ENCODE measurements at regions of chr2 and their contacts with region 1.

Region 1: DNA sequence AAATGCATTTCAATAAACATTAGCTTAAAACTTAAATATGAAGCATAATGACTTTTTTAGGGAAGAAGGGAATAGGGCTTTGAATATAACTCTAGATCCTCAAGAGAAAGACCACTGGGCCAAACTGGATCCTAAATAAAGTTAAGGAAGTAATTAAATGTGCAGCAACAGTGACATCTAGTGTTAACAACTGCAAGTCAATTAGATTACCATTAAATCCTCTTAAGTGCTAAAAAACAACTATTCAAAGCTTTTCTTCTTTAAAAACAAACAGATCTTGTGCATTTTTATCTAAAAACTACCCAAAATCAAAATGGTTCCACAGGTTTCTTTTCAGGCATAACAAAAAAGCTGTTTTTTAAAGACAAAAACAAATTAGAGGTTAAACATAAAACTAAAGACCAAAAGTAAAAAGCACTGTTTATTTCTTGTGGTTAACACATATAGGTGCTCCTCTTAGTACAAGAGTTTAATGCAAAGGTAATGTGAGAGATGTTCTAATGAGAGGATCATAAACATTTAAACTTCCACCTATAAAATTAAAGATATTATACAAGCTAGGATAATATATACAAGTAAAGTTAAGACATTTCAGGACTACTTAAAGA is 111.4 kb downstream of the THADA start:
- DNase-seq: peak; percentile 37
- H3K4me3 ChIP-seq: no peak overlapping the region
- CTCF ChIP-seq: peak; percentile 40

Region 2: GRCh38 chr2:42828487-42829425 is 655.7 kb before region 1 on chr2:
- CTCF ChIA-PET with region 1: interaction called, 70 read pairs
- POLR2A ChIA-PET with region 1: no interaction called
- DNase-seq: no peak
- H3K4me3 ChIP-seq: no peak overlapping the region
- CTCF ChIP-seq: peak; percentile 88

Region 3: DNA sequence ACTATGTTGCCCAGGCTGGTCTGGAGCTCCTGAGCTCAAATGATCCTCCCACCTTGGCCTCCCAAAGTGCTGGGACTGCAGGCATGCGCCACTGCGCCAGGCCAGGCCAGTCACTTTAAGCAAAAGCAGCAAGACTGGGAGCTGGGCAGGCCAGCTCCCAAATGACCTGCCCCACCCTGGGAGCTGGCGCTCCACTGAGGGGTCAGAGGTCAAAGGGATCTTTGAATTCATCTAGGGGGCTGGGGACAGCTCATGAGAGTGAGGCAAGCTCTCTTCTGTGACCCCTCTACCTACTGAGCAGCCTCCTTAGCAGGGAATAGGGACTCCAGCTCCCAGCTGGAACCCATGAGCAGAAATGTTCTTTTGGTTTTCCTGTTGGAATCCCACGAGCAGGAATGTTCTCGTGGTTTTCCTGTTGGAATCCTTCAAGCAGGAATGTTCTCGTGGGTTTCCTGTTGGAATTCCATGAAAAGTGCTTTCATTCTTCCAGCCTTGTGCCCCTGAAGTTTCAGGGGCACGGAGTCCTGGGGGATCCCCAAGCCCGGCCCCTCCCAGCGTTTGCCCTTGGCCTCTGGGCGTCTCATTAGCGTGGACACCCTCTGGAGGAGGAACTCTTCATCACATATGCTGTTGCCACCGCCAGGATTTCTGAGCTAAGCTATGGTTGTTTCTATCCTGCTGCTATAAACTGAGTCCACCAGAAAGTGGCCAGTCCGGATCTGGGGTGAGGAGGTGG is 530.0 kb before region 1 on chr2:
- CTCF ChIA-PET with region 1: interaction called, 13 read pairs
- POLR2A ChIA-PET with region 1: no interaction called
- DNase-seq: no peak
- H3K4me3 ChIP-seq: no peak overlapping the region
- CTCF ChIP-seq: no peak

Region 4: DNA sequence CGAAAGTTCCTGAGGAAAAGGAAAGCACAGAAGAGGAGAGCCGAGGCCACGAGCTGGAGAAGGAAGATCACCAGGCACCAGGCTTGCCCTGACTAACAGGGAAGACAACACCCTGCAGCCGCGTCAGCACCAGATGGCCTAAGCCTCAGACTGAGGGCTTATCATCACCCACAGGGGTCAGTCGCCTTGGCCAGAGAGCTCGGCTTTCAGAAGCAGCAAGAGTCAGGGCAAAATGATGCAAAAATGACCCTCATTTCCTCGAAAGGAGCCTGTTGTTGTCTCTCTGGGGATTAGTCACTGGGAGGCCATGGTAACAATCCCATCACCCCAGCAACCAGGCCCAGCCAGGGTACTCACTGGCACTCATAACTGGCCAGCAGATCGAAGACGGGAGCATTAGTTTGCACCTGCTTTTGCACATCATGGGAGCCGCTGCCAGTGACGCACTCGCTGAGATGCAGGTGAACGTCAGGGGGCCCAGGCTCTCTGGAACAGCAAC is 215.3 kb before region 1 on chr2:
- CTCF ChIA-PET with region 1: interaction called, 12 read pairs
- POLR2A ChIA-PET with region 1: no interaction called
- DNase-seq: peak; percentile 52
- H3K4me3 ChIP-seq: no peak overlapping the region
- CTCF ChIP-seq: no peak

Region 5: GRCh38 chr2:43462866-43463641 is 21.4 kb before region 1 on chr2:
- CTCF ChIA-PET with region 1: interaction called, 11 read pairs
- POLR2A ChIA-PET with region 1: no interaction called
- DNase-seq: no peak
- H3K4me3 ChIP-seq: no peak overlapping the region
- CTCF ChIP-seq: no peak

Region 6: GRCh38 chr2:43542285-43542937 is 58.0 kb after region 1 on chr2:
- CTCF ChIA-PET with region 1: interaction called, 35 read pairs
- POLR2A ChIA-PET with region 1: no interaction called
- DNase-seq: no peak
- H3K4me3 ChIP-seq: no peak overlapping the region
- CTCF ChIP-seq: peak; percentile 12

Region 7: GRCh38 chr2:43559391-43560230 is 75.2 kb after region 1 on chr2:
- CTCF ChIA-PET with region 1: no interaction called
- POLR2A ChIA-PET with region 1: no interaction called
- DNase-seq: no peak
- H3K4me3 ChIP-seq: no peak overlapping the region
- CTCF ChIP-seq: no peak

Region 8: GRCh38 chr2:43714164-43714563 is 229.7 kb after region 1 on chr2:
- CTCF ChIA-PET with region 1: no interaction called
- POLR2A ChIA-PET with region 1: no interaction called
- DNase-seq: no peak
- H3K4me3 ChIP-seq: no peak overlapping the region
- CTCF ChIP-seq: no peak

Measured in AG04449 (cell line).